Esophagus muscularis mucosa (tissue), 4 donors: ENCODE measurements at regions of chr1 and their contacts with region 1.

Region 1: DNA sequence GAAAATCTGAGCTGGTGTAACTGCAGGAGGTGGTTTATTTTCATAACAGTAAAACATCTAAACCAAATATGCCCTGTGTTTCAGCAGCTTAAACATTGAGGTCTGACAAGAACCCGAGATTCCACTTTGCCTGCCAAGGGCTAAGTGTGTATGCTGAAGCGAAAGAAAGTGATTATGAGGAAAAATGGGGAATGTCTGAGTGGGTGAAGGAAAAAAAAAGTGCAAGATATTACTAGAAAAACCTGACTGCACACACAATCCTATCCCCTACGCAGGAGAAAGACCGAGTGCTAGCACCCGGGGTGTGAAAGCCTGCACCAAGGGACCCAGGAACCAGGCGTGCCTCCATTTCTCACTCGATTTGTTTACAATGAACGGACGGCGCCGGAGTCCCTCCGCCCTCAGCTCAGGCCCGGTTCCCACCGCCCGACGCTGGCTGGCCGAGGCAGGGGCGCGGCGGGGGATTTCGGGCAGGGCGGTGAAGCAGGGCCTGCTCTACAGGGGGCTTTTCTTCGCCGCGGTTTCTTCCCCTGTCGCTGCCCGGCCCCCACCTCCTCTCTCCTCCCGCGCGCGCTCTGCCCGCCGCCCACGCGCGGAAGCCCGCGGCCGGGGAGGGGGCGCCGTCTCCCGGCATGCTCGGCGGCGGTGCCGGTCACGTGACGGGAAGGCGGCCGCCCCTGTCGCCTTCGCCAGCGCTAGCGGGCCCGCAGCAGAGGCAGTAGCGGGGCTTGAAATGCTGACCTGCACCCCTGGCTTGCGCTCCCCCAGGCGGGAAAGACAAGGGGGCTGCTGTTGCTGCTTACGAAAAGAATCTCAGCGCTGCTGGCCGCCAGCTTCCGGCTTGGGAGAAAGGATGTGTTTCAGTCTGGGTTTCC is 35.9 kb downstream of the ITPKB start:
- DNase-seq: no peak
- H3K4me3 ChIP-seq: peak overlapping the region; percentile 73 to 88 (median 74)
- H3K27ac ChIP-seq: peak overlapping the region in 1 of 4 donors; percentile 100
- H3K4me1 ChIP-seq: peaks cover 37 to 84% (median 58%) of the 10 kb centered on the region in 4 donors
- H3K27me3 ChIP-seq: no peaks in the 10 kb centered on the region
- CTCF ChIP-seq: no peak
- EP300 ChIP-seq: no peak
- POLR2A ChIP-seq: peak; percentile 86

Region 2: GRCh38 chr1:226662642-226663326 is 40.4 kb before region 1 on chr1:
- intact Hi-C with region 1: loop called (anchors 5 kb)
- DNase-seq: peak; percentile 98
- H3K4me3 ChIP-seq: peak overlapping the region in 3 of 4 donors; percentile 1 to 21 (median 2)
- H3K27ac ChIP-seq: no peak overlapping the region
- H3K4me1 ChIP-seq: peaks cover 0 to 32% (median 0%) of the 10 kb centered on the region in 4 donors
- H3K27me3 ChIP-seq: no peaks in the 10 kb centered on the region
- CTCF ChIP-seq: no peak
- EP300 ChIP-seq: peak; percentile 61
- POLR2A ChIP-seq: peak; percentile 23